Activated B cell treated with CpG ODN at 0.5 μM for 24 hours (primary cell): ENCODE measurements at regions of chr12 and their contacts with region 1.

Region 1: GRCh38 chr12:11765817-11766794 is 116.6 kb downstream of the ETV6 start:
- DNase-seq: peak; percentile 48
- ATAC-seq: peak; percentile 84
- H3K4me3 Mint-ChIP-seq: peak overlapping the region; percentile 77
- H3K27ac Mint-ChIP-seq: peak overlapping the region; percentile 93
- H3K4me1 Mint-ChIP-seq: peaks cover 92% of the 10 kb centered on the region
- H3K27me3 Mint-ChIP-seq: no peaks in the 10 kb centered on the region
- CTCF ChIP-seq: no peak

Region 2: DNA sequence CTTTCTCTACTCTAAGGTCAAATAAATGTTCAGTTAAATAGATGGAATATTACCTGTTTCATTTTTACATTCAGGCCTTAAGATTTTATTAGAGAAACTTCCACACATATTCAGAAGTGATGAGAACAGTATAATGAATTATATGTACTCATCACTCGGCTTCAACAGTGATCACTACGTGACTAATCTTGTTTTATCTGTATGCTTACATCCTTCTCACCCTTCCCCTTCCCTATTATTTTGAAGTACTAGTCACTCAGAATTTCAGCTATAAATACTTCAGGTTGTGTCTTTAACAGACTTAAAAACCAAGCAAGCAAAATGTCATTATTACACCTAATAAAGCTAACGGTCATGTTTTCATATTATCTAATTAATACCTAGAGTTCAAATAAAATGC is 81.7 kb before region 1 on chr12:
- CTCF ChIA-PET with region 1: no interaction called
- POLR2A ChIA-PET with region 1: interaction called, 10 read pairs
- intact Hi-C with region 1: no loop called
- DNase-seq: no peak
- ATAC-seq: no peak
- H3K4me3 Mint-ChIP-seq: no peak overlapping the region
- H3K27ac Mint-ChIP-seq: no peak overlapping the region
- H3K4me1 Mint-ChIP-seq: peaks cover 69% of the 10 kb centered on the region
- H3K27me3 Mint-ChIP-seq: no peaks in the 10 kb centered on the region
- CTCF ChIP-seq: no peak

Region 3: DNA sequence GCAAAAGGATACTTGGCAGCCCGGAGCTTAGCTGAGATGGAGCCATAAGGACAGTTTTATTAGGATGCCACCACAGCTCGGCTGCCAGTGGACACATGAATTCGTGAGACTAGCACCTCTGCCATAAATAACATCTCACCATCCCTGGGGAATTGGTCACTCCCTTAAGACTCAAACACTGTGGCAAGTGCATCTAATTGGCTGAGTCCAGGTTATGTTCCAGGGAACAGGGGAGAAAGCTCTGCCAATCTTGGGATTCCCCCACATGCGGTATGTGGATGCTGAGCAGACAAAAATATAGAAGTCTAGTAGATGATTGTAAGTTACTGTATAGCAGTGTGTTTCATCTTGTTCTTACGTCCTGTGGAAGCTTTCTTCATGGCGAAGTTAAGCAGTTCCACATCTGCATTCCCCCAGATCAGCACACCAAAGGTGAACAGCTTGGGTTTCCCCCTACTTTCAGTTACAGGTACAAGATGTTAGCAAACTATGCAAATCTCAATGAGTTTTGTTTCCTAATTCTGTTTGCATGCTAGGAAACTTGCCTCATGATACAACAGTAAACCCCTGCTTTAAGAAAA is 14.5 kb after region 1 on chr12:
- CTCF ChIA-PET with region 1: interaction called, 4 read pairs
- POLR2A ChIA-PET with region 1: interaction called, 13 read pairs
- intact Hi-C with region 1: loop called (anchors 1 kb)
- DNase-seq: no peak
- ATAC-seq: peak; percentile 76
- H3K4me3 Mint-ChIP-seq: peak overlapping the region; percentile 24
- H3K27ac Mint-ChIP-seq: peak overlapping the region; percentile 68
- H3K4me1 Mint-ChIP-seq: peaks cover 50% of the 10 kb centered on the region
- H3K27me3 Mint-ChIP-seq: no peaks in the 10 kb centered on the region
- CTCF ChIP-seq: no peak

Region 4: GRCh38 chr12:11812586-11813427 is 46.7 kb after region 1 on chr12:
- CTCF ChIA-PET with region 1: no interaction called
- POLR2A ChIA-PET with region 1: interaction called, 14 read pairs
- intact Hi-C with region 1: loop called (anchors 1 kb)
- DNase-seq: peak; percentile 32
- ATAC-seq: peak; percentile 83
- H3K4me3 Mint-ChIP-seq: peak overlapping the region; percentile 65
- H3K27ac Mint-ChIP-seq: peak overlapping the region; percentile 87
- H3K4me1 Mint-ChIP-seq: peaks cover 66% of the 10 kb centered on the region
- H3K27me3 Mint-ChIP-seq: no peaks in the 10 kb centered on the region
- CTCF ChIP-seq: no peak

Region 5: GRCh38 chr12:11822081-11822834 is 56.2 kb after region 1 on chr12:
- CTCF ChIA-PET with region 1: no interaction called
- POLR2A ChIA-PET with region 1: interaction called, 14 read pairs
- intact Hi-C with region 1: loop called (anchors 2 kb)
- DNase-seq: peak; percentile 48
- ATAC-seq: peak; percentile 70
- H3K4me3 Mint-ChIP-seq: peak overlapping the region; percentile 70
- H3K27ac Mint-ChIP-seq: peak overlapping the region; percentile 93
- H3K4me1 Mint-ChIP-seq: peaks cover 52% of the 10 kb centered on the region
- H3K27me3 Mint-ChIP-seq: no peaks in the 10 kb centered on the region
- CTCF ChIP-seq: no peak

Region 6: DNA sequence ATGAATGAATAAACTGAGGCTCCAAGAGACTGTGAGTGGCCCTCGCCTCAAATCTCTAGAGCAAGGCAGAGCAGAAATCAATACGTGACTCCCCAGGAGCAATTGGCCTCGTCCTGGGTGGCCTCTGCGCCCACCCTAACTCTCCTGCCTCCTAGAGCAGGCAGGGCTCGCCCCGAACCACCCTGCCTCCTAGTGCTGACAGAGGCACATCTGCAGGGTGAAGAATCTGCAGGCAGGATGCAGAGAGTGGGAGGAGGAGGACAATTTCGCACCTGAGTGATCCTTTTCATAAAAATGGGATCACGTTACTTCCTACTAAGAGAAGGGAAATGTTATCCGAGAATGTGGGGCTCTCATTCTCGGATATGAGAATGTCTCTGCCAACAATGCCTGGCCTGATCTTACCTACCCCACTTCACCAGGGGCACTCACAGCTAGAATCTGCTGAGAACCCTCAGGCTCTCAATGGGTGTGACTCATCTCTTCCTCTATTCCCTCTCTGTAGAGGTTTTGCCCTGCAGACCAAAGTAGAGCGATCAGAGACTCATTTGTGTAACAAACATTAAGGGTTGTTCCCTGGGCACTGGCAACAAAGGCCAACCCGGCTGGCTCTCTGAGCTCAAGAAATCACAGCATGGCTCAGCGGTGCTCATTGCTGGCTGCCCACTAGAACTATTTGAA is 243.0 kb after region 1 on chr12:
- CTCF ChIA-PET with region 1: no interaction called
- POLR2A ChIA-PET with region 1: interaction called, 15 read pairs
- intact Hi-C with region 1: loop called (anchors 2 kb)
- DNase-seq: no peak
- ATAC-seq: peak; percentile 60
- H3K4me3 Mint-ChIP-seq: peak overlapping the region; percentile 78
- H3K27ac Mint-ChIP-seq: peak overlapping the region; percentile 81
- H3K4me1 Mint-ChIP-seq: peaks cover 60% of the 10 kb centered on the region
- H3K27me3 Mint-ChIP-seq: no peaks in the 10 kb centered on the region
- CTCF ChIP-seq: no peak

Region 7: GRCh38 chr12:12107678-12108077 is 341.6 kb after region 1 on chr12:
- CTCF ChIA-PET with region 1: no interaction called
- POLR2A ChIA-PET with region 1: no interaction called
- intact Hi-C with region 1: no loop called
- DNase-seq: no peak
- ATAC-seq: no peak
- H3K4me3 Mint-ChIP-seq: no peak overlapping the region
- H3K27ac Mint-ChIP-seq: no peak overlapping the region
- H3K4me1 Mint-ChIP-seq: no peaks in the 10 kb centered on the region
- H3K27me3 Mint-ChIP-seq: peaks cover 2% of the 10 kb centered on the region
- CTCF ChIP-seq: no peak